HepG2 (cell line): ENCODE measurements at regions of chr15 and their contacts with region 1.

Region 1: GRCh38 chr15:23857028-23857641 is 170.0 kb upstream of the NDN start:
- DNase-seq: peak; percentile 53
- ATAC-seq: peak; percentile 84
- H3K4me3 ChIP-seq: no peak overlapping the region
- H3K27ac ChIP-seq: no peak overlapping the region
- H3K4me1 ChIP-seq: peaks cover 5% of the 10 kb centered on the region; the same call in 1 of the 2 replicates
- H3K27me3 ChIP-seq: no peaks in the 10 kb centered on the region; a peak in 2 of 5 replicates
- CTCF ChIP-seq: peak; percentile 76
- EP300 ChIP-seq: no peak
- POLR2A ChIP-seq: no peak
- RAD21 ChIP-seq: 0 out of 2 replicates have a peak, but pooled peaks have one; percentile 20

Region 2: GRCh38 chr15:23642413-23643044 is 214.6 kb before region 1 on chr15:
- CTCF ChIA-PET with region 1: interaction called, 31 read pairs
- POLR2A ChIA-PET with region 1: no interaction called
- in situ Hi-C with region 1: no loop called
- intact Hi-C with region 1: loop called (anchors 1 kb)
- DNase-seq: peak; percentile 51
- ATAC-seq: peak; percentile 93
- H3K4me3 ChIP-seq: no peak overlapping the region
- H3K27ac ChIP-seq: no peak overlapping the region
- H3K4me1 ChIP-seq: no peaks in the 10 kb centered on the region
- H3K27me3 ChIP-seq: peaks cover 2% of the 10 kb centered on the region in 2 experiments; a peak in 2 of 5 replicates
- CTCF ChIP-seq: peak; percentile 92
- EP300 ChIP-seq: no peak
- POLR2A ChIP-seq: no peak
- RAD21 ChIP-seq: peak; percentile 85

Region 3: DNA sequence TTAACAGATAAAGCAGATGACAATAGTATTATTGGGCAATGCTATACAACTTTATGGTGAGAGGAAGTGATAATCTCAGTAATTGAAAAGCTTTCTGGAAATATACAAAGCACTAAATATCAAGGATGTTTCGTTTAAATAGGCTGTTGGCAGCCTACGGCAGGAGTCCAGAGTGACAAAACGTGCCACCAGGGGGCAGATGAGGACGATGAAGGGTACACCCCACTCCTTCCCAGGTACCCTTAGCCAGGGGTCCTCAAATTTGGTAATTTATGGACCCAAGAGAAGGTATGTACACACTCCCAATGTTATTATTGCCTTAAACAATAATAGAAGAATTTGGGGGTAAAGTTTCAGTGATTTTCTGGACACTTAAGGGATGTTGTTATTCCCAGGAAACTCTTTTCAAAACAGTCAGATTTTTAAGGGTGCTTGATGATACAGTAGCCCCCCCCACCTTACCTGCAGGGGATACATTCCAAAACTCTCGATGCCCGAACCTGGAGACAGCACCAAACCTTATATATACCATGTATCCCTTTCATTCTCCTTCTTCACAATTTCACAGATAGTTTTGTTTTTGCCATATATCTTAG is 208.1 kb before region 1 on chr15:
- CTCF ChIA-PET with region 1: interaction called, 33 read pairs
- POLR2A ChIA-PET with region 1: no interaction called
- in situ Hi-C with region 1: no loop called
- intact Hi-C with region 1: loop called (anchors 1 kb)
- DNase-seq: peak; percentile 16
- ATAC-seq: peak; percentile 82
- H3K4me3 ChIP-seq: no peak overlapping the region
- H3K27ac ChIP-seq: no peak overlapping the region
- H3K4me1 ChIP-seq: no peaks in the 10 kb centered on the region
- H3K27me3 ChIP-seq: peaks cover 2 to 18% of the 10 kb centered on the region in 2 experiments; a peak in 2 of 5 replicates
- CTCF ChIP-seq: peak; percentile 75
- EP300 ChIP-seq: no peak
- POLR2A ChIP-seq: no peak
- RAD21 ChIP-seq: 0 out of 2 replicates have a peak, but pooled peaks have one; percentile 41

Region 4: DNA sequence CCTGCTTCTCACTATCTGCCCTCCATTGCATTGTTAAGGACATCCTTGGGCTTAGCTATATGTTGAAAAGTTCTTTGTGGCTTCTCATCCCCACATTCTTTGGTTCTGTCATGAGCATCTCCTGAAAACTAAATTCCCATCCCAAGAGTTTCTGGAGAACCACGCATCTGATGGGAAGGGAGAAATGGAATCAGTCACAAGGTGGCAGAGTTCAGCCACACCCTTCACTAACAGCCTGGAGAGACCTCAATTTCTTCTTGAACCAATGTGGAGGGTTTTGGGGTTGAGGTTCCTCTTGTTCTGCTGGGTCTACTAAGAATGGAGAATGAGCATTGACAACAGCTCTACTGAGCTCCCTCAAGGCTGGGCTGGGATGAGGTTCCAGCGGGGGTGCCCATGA is 193.9 kb before region 1 on chr15:
- CTCF ChIA-PET with region 1: interaction called, 18 read pairs
- POLR2A ChIA-PET with region 1: no interaction called
- in situ Hi-C with region 1: no loop called
- intact Hi-C with region 1: no loop called
- DNase-seq: peak; percentile 4
- ATAC-seq: peak; percentile 55
- H3K4me3 ChIP-seq: no peak overlapping the region
- H3K27ac ChIP-seq: no peak overlapping the region
- H3K4me1 ChIP-seq: no peaks in the 10 kb centered on the region
- H3K27me3 ChIP-seq: no peaks in the 10 kb centered on the region; a peak in 1 of 5 replicates
- CTCF ChIP-seq: peak; percentile 56
- EP300 ChIP-seq: no peak
- POLR2A ChIP-seq: no peak
- RAD21 ChIP-seq: no peak

Region 5: GRCh38 chr15:23760024-23760423 is 97.1 kb before region 1 on chr15:
- CTCF ChIA-PET with region 1: no interaction called
- POLR2A ChIA-PET with region 1: no interaction called
- in situ Hi-C with region 1: no loop called
- intact Hi-C with region 1: loop called (anchors 10 kb)
- DNase-seq: no peak
- ATAC-seq: peak; percentile 48; the same call in 2 of the 3 replicates
- H3K4me3 ChIP-seq: no peak overlapping the region
- H3K27ac ChIP-seq: no peak overlapping the region
- H3K4me1 ChIP-seq: no peaks in the 10 kb centered on the region
- H3K27me3 ChIP-seq: no peaks in the 10 kb centered on the region; a peak in 1 of 5 replicates
- CTCF ChIP-seq: peak; percentile 40
- EP300 ChIP-seq: no peak
- POLR2A ChIP-seq: no peak
- RAD21 ChIP-seq: no peak

Region 6: GRCh38 chr15:23787346-23788105 is 69.6 kb before region 1 on chr15:
- CTCF ChIA-PET with region 1: no interaction called
- POLR2A ChIA-PET with region 1: no interaction called
- in situ Hi-C with region 1: no loop called
- intact Hi-C with region 1: no loop called
- DNase-seq: no peak
- ATAC-seq: no peak
- H3K4me3 ChIP-seq: no peak overlapping the region
- H3K27ac ChIP-seq: no peak overlapping the region
- H3K4me1 ChIP-seq: no peaks in the 10 kb centered on the region
- H3K27me3 ChIP-seq: no peaks in the 10 kb centered on the region
- CTCF ChIP-seq: no peak
- EP300 ChIP-seq: no peak
- POLR2A ChIP-seq: no peak
- RAD21 ChIP-seq: no peak

Region 7: GRCh38 chr15:23823508-23823907 is 33.6 kb before region 1 on chr15:
- CTCF ChIA-PET with region 1: no interaction called
- POLR2A ChIA-PET with region 1: no interaction called
- in situ Hi-C with region 1: no loop called
- intact Hi-C with region 1: loop called (anchors 2 kb)
- DNase-seq: peak; percentile 29
- ATAC-seq: peak; percentile 99
- H3K4me3 ChIP-seq: no peak overlapping the region
- H3K27ac ChIP-seq: no peak overlapping the region
- H3K4me1 ChIP-seq: no peaks in the 10 kb centered on the region
- H3K27me3 ChIP-seq: no peaks in the 10 kb centered on the region
- CTCF ChIP-seq: peak; percentile 58
- EP300 ChIP-seq: no peak
- POLR2A ChIP-seq: no peak
- RAD21 ChIP-seq: peak; percentile 33; the same call in 1 of the 2 replicates